GM12878 (cell line): ENCODE measurements at regions of chr5 and their contacts with region 1.

Region 1: DNA sequence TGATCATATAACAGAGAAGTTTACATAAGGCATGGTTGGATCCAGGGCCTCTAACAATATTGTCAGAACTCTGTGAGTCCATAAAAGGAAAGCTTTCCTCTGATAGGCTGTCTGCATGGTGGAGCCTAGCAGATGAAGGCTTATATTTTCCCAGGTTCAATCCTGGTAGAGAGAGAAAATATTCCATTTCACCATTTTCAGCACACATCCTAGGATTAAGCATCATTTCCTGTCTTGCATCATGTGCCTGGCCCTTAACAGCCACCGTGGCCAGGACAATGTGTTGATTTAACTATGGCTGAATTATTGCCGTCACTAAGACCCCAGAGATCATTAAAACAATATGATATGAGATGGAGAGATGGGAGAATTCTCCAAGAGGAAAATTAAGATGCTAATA is 90.9 kb upstream of the GRIA1 start:
- DNase-seq: no peak
- ATAC-seq: no peak
- H3K4me3 ChIP-seq: no peak overlapping the region
- H3K27ac ChIP-seq: no peak overlapping the region
- H3K4me1 ChIP-seq: no peaks in the 10 kb centered on the region
- H3K27me3 ChIP-seq: no peaks in the 10 kb centered on the region
- CTCF ChIP-seq: no peak
- EP300 ChIP-seq: no peak
- POLR2A ChIP-seq: no peak
- RAD21 ChIP-seq: no peak

Region 2: DNA sequence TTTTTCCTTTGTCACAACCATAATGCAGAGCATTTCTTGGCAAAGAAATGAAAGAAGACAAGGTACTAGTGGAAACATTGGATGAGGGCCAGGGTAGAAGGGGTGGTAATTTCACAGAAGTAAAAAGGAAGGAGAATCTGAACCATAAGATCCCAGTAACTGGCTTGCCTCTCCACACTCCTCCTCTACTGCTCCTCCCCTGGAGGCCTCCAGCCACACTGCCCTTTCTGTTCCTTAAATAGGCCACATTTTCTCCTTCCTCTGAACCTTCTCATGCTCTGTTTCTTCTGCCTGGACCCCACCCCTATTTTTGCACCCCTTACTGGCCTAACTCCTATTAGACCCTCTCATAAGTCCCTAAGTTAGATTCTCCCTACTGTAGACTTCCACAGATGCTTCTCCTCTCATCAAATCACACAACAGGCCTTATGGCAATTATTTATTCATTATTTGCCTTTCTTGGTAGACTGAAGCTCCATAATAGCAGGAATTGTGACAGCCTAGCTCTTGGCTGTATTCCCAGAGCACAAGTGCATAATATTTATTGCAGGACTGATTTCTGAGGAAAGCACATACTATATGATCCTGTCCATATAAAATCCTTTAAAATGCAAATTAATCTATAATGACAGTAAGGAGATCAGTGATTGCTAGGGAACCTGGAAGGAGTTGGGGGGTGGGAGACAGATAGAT is 59.6 kb after region 1 on chr5:
- CTCF ChIA-PET with region 1: no interaction called
- POLR2A ChIA-PET with region 1: no interaction called
- RAD21 ChIA-PET with region 1: no interaction called
- SMC1A ChIA-PET with region 1: no interaction called
- in situ Hi-C with region 1: no loop called
- intact Hi-C with region 1: loop called (anchors 10 kb)
- DNase-seq: no peak
- ATAC-seq: no peak
- H3K4me3 ChIP-seq: no peak overlapping the region
- H3K27ac ChIP-seq: no peak overlapping the region
- H3K4me1 ChIP-seq: no peaks in the 10 kb centered on the region
- H3K27me3 ChIP-seq: no peaks in the 10 kb centered on the region
- CTCF ChIP-seq: no peak
- EP300 ChIP-seq: no peak
- POLR2A ChIP-seq: no peak
- RAD21 ChIP-seq: no peak